CD4-positive, alpha-beta T cell (primary cell): ENCODE measurements at regions of chr14 and their contacts with region 1.

Region 1: DNA sequence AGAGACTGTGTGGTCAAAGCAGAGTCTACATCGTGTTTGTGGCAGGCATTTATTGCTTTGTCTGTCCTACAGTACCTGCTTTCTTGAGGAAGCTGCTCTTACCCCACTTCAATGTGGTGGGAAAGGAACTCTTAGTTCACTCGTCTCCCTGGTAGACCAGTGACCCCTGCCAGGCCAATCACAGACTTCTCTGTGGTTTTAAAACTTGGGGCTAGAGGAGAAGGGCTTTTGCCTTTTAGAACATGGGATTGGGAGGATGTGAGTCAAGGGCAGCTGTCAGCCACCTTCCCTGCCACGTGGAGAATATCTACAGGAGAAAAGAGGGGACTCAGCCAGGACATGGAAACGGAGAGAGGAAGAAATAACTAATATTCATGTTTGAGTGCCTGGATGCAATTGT is 36.8 kb upstream of the TMED10 start:
- DNase-seq: no peak
- ATAC-seq: no peak
- H3K4me3 ChIP-seq: no peak overlapping the region
- H3K4me3 Mint-ChIP-seq: no peak overlapping the region
- H3K27ac ChIP-seq: no peak overlapping the region
- H3K27ac Mint-ChIP-seq: no peak overlapping the region
- H3K4me1 ChIP-seq: peaks cover 21% of the 10 kb centered on the region
- H3K4me1 Mint-ChIP-seq: peaks cover 33% of the 10 kb centered on the region
- H3K27me3 ChIP-seq: no peaks in the 10 kb centered on the region
- H3K27me3 Mint-ChIP-seq: no peaks in the 10 kb centered on the region
- CTCF ChIP-seq: no peak

Region 2: DNA sequence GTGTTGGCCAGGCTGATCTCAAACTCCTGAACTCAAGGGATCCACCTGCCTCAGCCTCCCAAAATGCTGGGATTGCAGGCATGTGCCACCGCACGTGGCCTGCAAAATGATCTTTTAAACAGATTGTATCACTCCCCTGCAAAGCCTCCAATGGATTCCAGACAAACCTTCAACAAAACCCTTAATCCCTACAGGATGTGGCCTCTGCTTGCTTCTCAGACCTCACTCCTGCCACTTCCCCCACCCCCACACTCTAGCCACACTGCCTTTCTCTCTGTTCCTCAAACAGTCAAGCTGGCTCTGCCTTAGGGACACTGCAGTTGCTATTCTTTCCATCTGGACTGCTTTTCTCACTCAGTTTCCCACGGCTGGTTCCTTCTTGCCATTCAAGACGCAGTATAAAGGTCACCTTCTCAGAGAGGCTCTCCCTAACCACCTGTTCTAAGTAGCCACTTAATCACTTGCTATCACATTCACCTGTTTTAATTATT is 10.5 kb after region 1 on chr14:
- CTCF ChIA-PET with region 1: no interaction called
- POLR2A ChIA-PET with region 1: no interaction called
- intact Hi-C with region 1: no loop called
- DNase-seq: peak in 2 of 14 experiments; percentile 15 to 34
- ATAC-seq: no peak
- H3K4me3 ChIP-seq: no peak overlapping the region
- H3K4me3 Mint-ChIP-seq: no peak overlapping the region
- H3K27ac ChIP-seq: no peak overlapping the region
- H3K27ac Mint-ChIP-seq: no peak overlapping the region
- H3K4me1 ChIP-seq: peaks cover 10% of the 10 kb centered on the region
- H3K4me1 Mint-ChIP-seq: peaks cover 23% of the 10 kb centered on the region
- H3K27me3 ChIP-seq: no peaks in the 10 kb centered on the region
- H3K27me3 Mint-ChIP-seq: no peaks in the 10 kb centered on the region
- CTCF ChIP-seq: no peak

Region 3: DNA sequence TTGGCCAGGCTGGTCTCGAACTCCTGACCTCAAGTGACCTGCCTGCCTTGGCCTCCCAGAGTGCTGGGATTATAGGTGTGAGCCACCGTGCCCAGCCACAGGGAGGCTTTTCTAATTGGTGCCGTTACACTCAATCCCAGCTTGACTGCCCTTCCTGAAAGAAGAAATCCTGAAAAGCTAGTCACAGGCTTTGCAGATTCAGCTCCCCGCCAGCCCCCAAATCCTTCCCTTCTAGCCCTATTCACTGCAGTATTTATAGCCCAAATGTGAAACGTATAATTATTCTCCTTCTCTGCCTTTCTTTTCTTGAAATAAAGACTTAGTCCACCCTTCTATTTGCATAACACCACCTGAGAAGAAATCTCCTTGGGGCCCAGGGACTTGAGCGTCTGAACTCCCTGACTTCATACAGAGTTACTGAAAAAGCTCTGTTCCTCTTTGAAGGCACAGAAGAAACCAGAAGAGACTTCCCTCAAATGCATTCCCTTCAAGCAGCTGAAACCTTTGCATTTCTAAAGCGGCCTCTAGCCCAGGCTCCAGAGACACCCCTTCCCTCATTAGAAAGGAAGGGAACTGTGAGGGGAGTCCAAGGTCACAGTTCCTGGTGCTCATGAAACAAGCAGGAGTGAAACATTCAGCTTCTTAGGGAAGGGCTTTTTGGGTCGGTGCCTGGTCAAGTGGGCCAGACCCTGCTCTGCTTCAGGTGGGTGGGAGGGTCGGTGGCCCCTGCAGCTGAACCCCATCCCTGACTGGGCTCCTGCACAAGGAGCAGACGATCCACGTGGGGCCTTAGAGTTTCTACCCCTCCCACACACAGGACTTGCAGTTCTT is 266.8 kb after region 1 on chr14:
- CTCF ChIA-PET with region 1: no interaction called
- POLR2A ChIA-PET with region 1: no interaction called
- intact Hi-C with region 1: loop called in 1 of 2 experiments (anchors 5 kb)
- DNase-seq: no peak
- ATAC-seq: no peak
- H3K4me3 ChIP-seq: no peak overlapping the region
- H3K4me3 Mint-ChIP-seq: no peak overlapping the region
- H3K27ac ChIP-seq: no peak overlapping the region
- H3K27ac Mint-ChIP-seq: no peak overlapping the region
- H3K4me1 ChIP-seq: no peaks in the 10 kb centered on the region
- H3K4me1 Mint-ChIP-seq: no peaks in the 10 kb centered on the region
- H3K27me3 ChIP-seq: no peaks in the 10 kb centered on the region
- H3K27me3 Mint-ChIP-seq: peaks cover 5% of the 10 kb centered on the region
- CTCF ChIP-seq: no peak